CD4-positive, alpha-beta memory T cell (primary cell): ENCODE measurements at regions of chr6 and their contacts with region 1.

Region 1: GRCh38 chr6:161370880-161371279 is 97.0 kb upstream of the AGPAT4 start:
- DNase-seq: peak; percentile 72 to 76 (median 73)
- H3K4me3 ChIP-seq: no peak overlapping the region
- H3K4me3 Mint-ChIP-seq: no peak overlapping the region
- H3K27ac ChIP-seq: no peak overlapping the region
- H3K27ac Mint-ChIP-seq: peak overlapping the region in 3 of 7 donors; percentile 6 to 13 (median 7)
- H3K4me1 ChIP-seq: no peaks in the 10 kb centered on the region
- H3K4me1 Mint-ChIP-seq: peaks cover 0 to 3% (median 1%) of the 10 kb centered on the region in 4 donors
- H3K27me3 ChIP-seq: no peaks in the 10 kb centered on the region
- H3K27me3 Mint-ChIP-seq: no peaks in the 10 kb centered on the region

Region 2: GRCh38 chr6:160520043-160520904 is 850.6 kb before region 1 on chr6:
- CTCF ChIA-PET with region 1: interaction called, 14 read pairs
- POLR2A ChIA-PET with region 1: no interaction called
- intact Hi-C with region 1: no loop called
- DNase-seq: peak; percentile 73 to 81 (median 74)
- H3K4me3 ChIP-seq: peak overlapping the region; percentile 79 to 97
- H3K4me3 Mint-ChIP-seq: peak overlapping the region; percentile 88 to 99 (median 96)
- H3K27ac ChIP-seq: peak overlapping the region; percentile 65
- H3K27ac Mint-ChIP-seq: peak overlapping the region; percentile 87 to 98 (median 96)
- H3K4me1 ChIP-seq: peaks cover 27% of the 10 kb centered on the region
- H3K4me1 Mint-ChIP-seq: peaks cover 35 to 56% (median 48%) of the 10 kb centered on the region in 4 donors
- H3K27me3 ChIP-seq: no peaks in the 10 kb centered on the region
- H3K27me3 Mint-ChIP-seq: no peaks in the 10 kb centered on the region

Region 3: DNA sequence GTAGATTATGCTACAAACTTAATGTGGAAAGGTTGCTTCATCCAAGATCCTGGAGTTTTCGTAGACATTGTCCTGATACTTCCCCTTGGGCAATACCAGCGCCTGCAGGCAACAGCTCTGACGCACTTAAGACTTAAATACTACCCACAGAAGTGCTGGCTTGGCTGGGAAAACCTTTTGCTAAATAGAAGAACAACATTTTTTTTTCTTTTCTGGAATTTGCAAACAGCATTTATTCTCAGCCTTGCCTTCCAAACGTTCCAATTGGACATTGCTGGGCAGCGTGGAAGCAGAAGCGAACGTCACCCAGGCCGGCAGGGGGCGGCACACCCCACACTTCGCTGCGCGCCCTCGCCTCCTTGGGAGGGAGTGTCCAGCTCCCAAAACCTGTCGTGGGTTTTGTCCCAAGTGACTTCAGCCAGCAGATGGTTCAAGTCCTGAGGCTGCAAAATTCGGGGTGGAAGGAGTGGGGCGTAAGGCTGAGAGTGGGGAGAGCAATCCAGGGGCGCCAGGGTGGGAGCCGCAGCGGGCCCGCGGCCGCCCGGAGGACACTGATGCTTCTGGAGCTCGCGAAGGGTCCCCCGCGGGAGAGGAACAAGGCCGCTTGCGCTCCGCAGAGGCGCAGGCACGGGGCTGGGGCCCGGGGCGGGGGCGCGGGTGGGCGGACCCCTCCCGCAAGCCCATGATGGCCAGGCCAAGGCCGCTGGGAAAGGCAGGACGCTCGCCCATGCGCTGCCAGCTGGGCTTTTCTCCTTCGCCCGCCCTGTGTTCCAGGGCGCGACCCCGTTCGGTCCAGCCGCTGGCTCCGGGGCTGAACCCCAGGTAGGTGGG is 440.1 kb before region 1 on chr6:
- CTCF ChIA-PET with region 1: interaction called, 617 read pairs
- POLR2A ChIA-PET with region 1: interaction called, 4 read pairs
- intact Hi-C with region 1: loop called (anchors 1 kb)
- DNase-seq: peak; percentile 46 to 59 (median 49)
- H3K4me3 ChIP-seq: peak overlapping the region in 1 of 2 donors; percentile 44
- H3K4me3 Mint-ChIP-seq: peak overlapping the region; percentile 40 to 75 (median 62)
- H3K27ac ChIP-seq: no peak overlapping the region
- H3K27ac Mint-ChIP-seq: no peak overlapping the region
- H3K4me1 ChIP-seq: no peaks in the 10 kb centered on the region
- H3K4me1 Mint-ChIP-seq: peaks cover 2 to 11% (median 8%) of the 10 kb centered on the region in 4 donors
- H3K27me3 ChIP-seq: no peaks in the 10 kb centered on the region
- H3K27me3 Mint-ChIP-seq: peaks cover 16 to 22% of the 10 kb centered on the region in 2 donors

Region 4: GRCh38 chr6:161101517-161101916 is 269.4 kb before region 1 on chr6:
- CTCF ChIA-PET with region 1: interaction called, 5 read pairs
- POLR2A ChIA-PET with region 1: no interaction called
- intact Hi-C with region 1: loop called (anchors 5 kb)
- DNase-seq: no peak
- H3K4me3 ChIP-seq: no peak overlapping the region
- H3K4me3 Mint-ChIP-seq: no peak overlapping the region
- H3K27ac ChIP-seq: no peak overlapping the region
- H3K27ac Mint-ChIP-seq: peak overlapping the region in 3 of 7 donors; percentile 11 to 55 (median 47)
- H3K4me1 ChIP-seq: no peaks in the 10 kb centered on the region
- H3K4me1 Mint-ChIP-seq: peaks cover 0 to 2% (median 0%) of the 10 kb centered on the region in 4 donors
- H3K27me3 ChIP-seq: no peaks in the 10 kb centered on the region
- H3K27me3 Mint-ChIP-seq: no peaks in the 10 kb centered on the region

Region 5: GRCh38 chr6:161353208-161353613 is 17.7 kb before region 1 on chr6:
- CTCF ChIA-PET with region 1: interaction called, 30 read pairs
- POLR2A ChIA-PET with region 1: no interaction called
- intact Hi-C with region 1: no loop called
- DNase-seq: no peak
- H3K4me3 ChIP-seq: no peak overlapping the region
- H3K4me3 Mint-ChIP-seq: no peak overlapping the region
- H3K27ac ChIP-seq: no peak overlapping the region
- H3K27ac Mint-ChIP-seq: no peak overlapping the region
- H3K4me1 ChIP-seq: no peaks in the 10 kb centered on the region
- H3K4me1 Mint-ChIP-seq: peaks cover 0 to 5% (median 3%) of the 10 kb centered on the region in 4 donors
- H3K27me3 ChIP-seq: no peaks in the 10 kb centered on the region
- H3K27me3 Mint-ChIP-seq: no peaks in the 10 kb centered on the region

Region 6: DNA sequence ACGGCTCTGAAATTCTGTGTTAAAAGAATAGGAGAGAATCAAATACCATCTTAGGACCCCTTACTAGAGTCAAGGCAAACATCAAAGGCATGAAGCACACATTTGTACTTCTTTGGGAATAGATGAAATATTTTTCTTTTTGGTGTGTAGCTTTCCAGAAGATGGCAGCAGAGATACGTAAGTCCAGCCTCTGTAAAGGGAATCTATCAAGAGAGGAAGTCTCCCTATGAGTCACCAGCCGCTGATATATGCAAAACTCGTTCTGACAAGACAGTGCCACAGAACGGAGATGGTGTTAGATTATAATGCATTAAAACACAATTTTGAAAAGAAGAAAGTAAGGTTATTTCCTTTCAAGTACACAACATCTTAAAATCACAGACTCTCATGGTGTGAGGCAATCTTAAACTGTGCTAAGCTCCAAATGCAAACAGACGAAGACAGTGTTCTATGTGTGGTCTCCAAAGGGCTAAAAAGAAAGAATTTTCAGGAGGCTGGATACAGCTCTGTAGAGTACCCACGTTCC is 23.0 kb after region 1 on chr6:
- CTCF ChIA-PET with region 1: interaction called, 46 read pairs
- POLR2A ChIA-PET with region 1: no interaction called
- intact Hi-C with region 1: no loop called
- DNase-seq: peak; percentile 64 to 84 (median 76)
- H3K4me3 ChIP-seq: no peak overlapping the region
- H3K4me3 Mint-ChIP-seq: no peak overlapping the region
- H3K27ac ChIP-seq: no peak overlapping the region
- H3K27ac Mint-ChIP-seq: no peak overlapping the region
- H3K4me1 ChIP-seq: peaks cover 8% of the 10 kb centered on the region
- H3K4me1 Mint-ChIP-seq: no peaks in the 10 kb centered on the region
- H3K27me3 ChIP-seq: no peaks in the 10 kb centered on the region
- H3K27me3 Mint-ChIP-seq: no peaks in the 10 kb centered on the region

Region 7: DNA sequence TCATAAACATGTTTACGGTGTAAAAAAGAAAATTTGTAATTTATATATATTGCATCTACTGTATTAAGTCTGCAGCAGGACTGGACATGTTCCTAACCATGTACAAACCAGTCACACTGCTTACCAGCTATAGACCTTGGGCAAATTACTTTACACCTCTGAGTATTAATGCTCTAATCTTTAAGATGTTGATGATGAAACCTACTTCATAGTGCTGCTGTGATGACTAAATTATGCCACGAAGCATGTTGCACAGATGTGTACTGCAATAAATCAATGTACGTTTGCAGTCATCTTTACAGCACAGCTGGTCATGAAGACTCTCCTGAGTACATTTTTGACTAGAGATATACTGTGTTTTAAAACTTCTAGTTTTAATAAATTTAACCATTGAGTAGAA is 1314.1 kb after region 1 on chr6:
- CTCF ChIA-PET with region 1: no interaction called
- POLR2A ChIA-PET with region 1: no interaction called
- intact Hi-C with region 1: no loop called
- DNase-seq: no peak
- H3K4me3 ChIP-seq: no peak overlapping the region
- H3K4me3 Mint-ChIP-seq: no peak overlapping the region
- H3K27ac ChIP-seq: no peak overlapping the region
- H3K27ac Mint-ChIP-seq: no peak overlapping the region
- H3K4me1 ChIP-seq: no peaks in the 10 kb centered on the region
- H3K4me1 Mint-ChIP-seq: no peaks in the 10 kb centered on the region
- H3K27me3 ChIP-seq: no peaks in the 10 kb centered on the region
- H3K27me3 Mint-ChIP-seq: no peaks in the 10 kb centered on the region